ENCODE measurements at regions of chr11 and their contacts with region 1.

Region 1: DNA sequence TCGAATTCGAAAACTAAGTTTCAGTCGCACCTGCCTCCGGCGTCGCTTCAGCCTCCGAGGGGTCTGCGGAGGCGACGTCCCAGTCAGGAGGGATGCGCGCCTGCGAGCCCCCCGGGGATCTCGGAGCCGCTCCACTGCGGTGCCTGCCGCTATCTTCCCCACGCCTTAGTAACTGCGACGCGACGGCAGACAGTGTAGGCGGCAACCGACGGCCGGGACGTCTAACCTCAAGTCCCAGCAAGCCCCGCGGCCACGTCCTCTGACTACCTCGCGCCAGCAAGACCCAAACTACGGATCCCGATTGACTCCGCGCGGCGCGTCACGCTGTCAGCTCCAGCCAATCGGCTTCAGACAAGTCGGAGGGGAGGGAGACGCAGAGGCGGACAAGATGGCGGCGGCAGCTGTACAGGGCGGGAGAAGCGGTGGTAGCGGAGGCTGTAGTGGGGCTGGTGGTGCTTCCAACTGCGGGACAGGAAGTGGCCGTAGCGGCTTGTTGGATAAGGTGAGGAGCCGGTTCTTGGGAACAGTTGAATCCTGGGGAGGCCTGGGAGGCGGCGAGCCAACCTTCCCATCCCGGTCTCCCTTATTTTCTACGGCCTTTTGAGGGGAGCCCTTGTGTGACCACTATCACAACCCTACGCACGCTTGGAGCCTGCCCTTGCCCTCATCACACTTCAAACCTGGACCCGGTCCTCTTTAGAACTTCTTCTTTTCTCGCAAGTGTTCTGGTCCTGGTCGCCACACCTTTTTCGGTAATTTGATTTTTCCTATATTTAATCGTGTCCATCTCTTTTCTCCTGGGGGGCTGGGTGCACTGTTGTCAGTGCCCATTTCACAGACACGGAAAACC is at the starts of genes SPCS2 and XRRA1:
- DNase-seq: peak; percentile 97 to 98
- H3K4me3 ChIP-seq: peak within 1 kb of the TSS; percentile 96
- H3K27ac ChIP-seq: peak within 1 kb of the TSS; percentile 58
- H3K4me1 ChIP-seq: peaks cover 18% of the 10 kb centered on the region
- H3K27me3 ChIP-seq: no peaks in the 10 kb centered on the region
- CTCF ChIP-seq: no peak
- total RNA-seq, gene SPCS2: 122 and 175 TPM in 2 replicates
- total RNA-seq, gene XRRA1: 29.5 and 43.0 TPM in 2 replicates

Region 2: GRCh38 chr11:74978041-74978440 is 28.9 kb after region 1 on chr11:
- CTCF ChIA-PET with region 1: no interaction called
- POLR2A ChIA-PET with region 1: no interaction called
- intact Hi-C with region 1: no loop called
- DNase-seq: no peak
- H3K4me3 ChIP-seq: no peak overlapping the region
- H3K27ac ChIP-seq: no peak overlapping the region
- H3K4me1 ChIP-seq: no peaks in the 10 kb centered on the region
- H3K27me3 ChIP-seq: no peaks in the 10 kb centered on the region
- CTCF ChIP-seq: no peak

Region 3: GRCh38 chr11:74988541-74989260 is 39.6 kb after region 1 on chr11 and contains the start of gene NEU3:
- CTCF ChIA-PET with region 1: no interaction called
- POLR2A ChIA-PET with region 1: no interaction called
- intact Hi-C with region 1: loop called (anchors 5 kb)
- DNase-seq: peak; percentile 75 to 81
- H3K4me3 ChIP-seq: peak within 1 kb of the TSS; percentile 77
- H3K27ac ChIP-seq: 0 out of 2 replicates have a peak within 1 kb of the TSS, but pooled peaks have one; percentile 30
- H3K4me1 ChIP-seq: peaks cover 9% of the 10 kb centered on the region
- H3K27me3 ChIP-seq: no peaks in the 10 kb centered on the region
- CTCF ChIP-seq: no peak
- total RNA-seq, gene NEU3: 9.9 and 11.8 TPM in 2 replicates

Region 4: DNA sequence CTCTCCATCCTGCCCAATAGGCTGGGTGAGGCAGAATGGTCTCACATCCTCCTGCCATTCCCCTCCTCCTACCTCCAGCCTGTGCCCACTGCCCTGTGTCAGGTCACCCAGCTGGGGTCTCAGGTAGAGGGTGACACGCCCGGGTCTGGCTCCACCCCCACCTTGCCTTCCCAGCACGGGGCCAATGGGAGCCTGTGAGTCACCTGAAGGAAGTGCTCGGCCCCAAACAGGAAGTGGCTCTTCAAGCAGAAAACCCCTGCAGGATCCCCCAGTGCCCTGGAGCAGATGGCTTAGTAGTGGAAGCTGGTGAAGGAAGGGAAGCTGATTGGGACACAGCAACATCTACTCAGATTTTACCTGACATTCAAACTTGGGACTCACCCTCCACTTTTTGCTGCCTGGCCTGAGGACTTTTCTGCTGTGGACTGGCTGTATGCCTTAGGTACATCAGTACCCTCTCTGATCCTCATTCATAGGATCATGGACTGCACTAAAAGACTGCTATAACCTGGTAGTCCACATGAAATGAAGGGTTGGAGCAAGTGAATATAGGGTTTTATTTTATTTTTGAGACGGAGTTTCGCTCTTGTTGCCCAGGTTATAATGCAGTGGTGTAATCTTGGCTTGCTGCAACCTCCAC is 543.2 kb after region 1 on chr11:
- CTCF ChIA-PET with region 1: no interaction called
- POLR2A ChIA-PET with region 1: no interaction called
- intact Hi-C with region 1: no loop called
- DNase-seq: no peak
- H3K4me3 ChIP-seq: no peak overlapping the region
- H3K27ac ChIP-seq: no peak overlapping the region
- H3K4me1 ChIP-seq: peaks cover 27% of the 10 kb centered on the region
- H3K27me3 ChIP-seq: no peaks in the 10 kb centered on the region
- CTCF ChIP-seq: no peak

Measured in PC-9 (cell line).